Motor neuron (in vitro differentiated cells): ENCODE measurements at regions of chr16 and their contacts with region 1.

Region 1: GRCh38 chr16:68229431-68230198 is 6.3 kb downstream of the ESRP2 start:
- ATAC-seq: peak in 5 of 8 experiments; percentile 10 to 64 (median 44)
- H3K4me3 ChIP-seq: no peak overlapping the region
- H3K27ac ChIP-seq: no peak overlapping the region
- H3K4me1 ChIP-seq: peaks cover 0 to 7% of the 10 kb centered on the region in 2 donors

Region 2: GRCh38 chr16:67993189-67994039 is 236.2 kb before region 1 on chr16:
- in situ Hi-C with region 1: loop called in 1 of 9 experiments (anchors 10 kb)
- ATAC-seq: peak; percentile 85 to 98 (median 94)
- H3K4me3 ChIP-seq: no peak overlapping the region
- H3K27ac ChIP-seq: no peak overlapping the region
- H3K4me1 ChIP-seq: no peaks in the 10 kb centered on the region

Region 3: DNA sequence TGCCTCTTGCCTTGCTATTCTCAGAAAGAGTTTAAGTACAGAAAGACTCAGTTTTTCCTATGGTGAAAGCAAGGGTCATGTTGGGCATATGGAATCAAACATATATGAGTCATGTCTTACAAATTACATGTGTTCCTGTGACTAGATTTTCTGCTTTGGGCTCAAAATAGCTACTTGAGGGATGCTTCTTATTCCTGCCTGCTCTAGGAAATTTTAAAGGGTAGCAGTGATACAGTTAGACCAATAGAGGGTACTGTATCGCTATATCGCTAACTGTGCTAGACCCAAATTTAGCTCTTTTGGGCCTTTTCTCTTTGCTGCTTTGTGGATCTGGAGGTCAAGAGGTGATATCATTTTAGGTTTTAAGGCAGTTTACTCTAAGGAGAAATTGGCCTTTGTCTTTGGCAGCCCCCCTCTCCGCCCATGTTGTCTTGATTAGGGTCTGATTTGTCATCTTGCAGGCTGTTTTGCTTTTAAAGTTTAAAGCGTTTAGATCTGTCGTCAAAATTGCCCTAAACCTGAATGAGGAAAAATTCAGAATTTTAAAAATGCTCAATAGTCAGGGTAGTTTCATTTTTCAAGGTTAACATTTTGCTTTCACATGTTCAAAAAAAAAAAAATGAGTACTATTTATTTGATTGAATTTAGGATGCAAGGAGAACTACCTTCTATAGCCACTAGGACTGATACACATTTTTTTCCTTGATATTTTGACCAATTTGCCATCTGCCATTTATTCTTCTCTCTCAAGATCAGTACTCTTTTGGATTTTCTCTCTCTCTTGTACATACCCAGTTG is 135.6 kb before region 1 on chr16:
- in situ Hi-C with region 1: loop called in 1 of 9 experiments (anchors 10 kb)
- ATAC-seq: peak in 7 of 8 experiments; percentile 37 to 91 (median 70)
- H3K4me3 ChIP-seq: no peak overlapping the region
- H3K27ac ChIP-seq: no peak overlapping the region
- H3K4me1 ChIP-seq: peaks cover 0 to 5% of the 10 kb centered on the region in 2 donors